Activated naive CD4-positive, alpha-beta T cell treated with anti-CD3 and anti-CD28 coated beads for 36 hours (primary cell): ENCODE measurements at regions of chr16 and their contacts with region 1.

Region 1: DNA sequence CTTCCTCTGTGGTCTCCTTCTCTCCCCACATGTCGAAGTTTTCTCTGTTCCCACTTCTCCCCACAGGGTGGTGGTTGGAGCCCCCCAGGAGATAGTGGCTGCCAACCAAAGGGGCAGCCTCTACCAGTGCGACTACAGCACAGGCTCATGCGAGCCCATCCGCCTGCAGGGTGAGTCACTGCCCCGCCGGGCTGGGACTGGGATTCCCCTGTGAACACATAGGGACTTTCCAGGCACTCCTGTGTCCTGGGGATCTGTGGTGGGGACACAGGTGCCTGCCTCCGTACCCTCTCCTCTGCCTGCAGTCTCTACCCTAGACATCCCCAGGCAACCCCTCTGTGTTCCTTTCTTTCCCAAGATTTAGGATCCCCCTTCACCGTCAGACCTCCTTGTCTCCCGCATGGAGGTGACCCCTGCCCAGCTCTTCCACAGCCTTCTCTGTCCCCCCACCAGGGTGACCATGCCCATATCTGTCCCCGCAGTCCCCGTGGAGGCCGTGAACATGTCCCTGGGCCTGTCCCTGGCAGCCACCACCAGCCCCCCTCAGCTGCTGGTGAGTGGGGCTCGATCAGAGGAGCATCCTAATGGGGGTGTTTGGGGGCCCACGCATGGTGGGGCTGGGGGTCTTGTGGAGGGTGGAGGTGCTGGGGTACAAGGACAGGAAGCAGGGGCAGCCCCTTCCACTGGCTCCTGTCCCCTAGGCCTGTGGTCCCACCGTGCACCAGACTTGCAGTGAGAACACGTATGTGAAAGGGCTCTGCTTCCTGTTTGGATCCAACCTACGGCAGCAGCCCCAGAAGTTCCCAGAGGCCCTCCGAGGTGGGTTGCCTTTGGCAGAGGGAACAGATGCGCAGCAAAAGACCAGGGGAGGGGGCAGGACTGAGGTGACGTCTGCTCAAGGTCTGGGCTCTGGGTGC is 5.8 kb downstream of the ITGAM start:
- DNase-seq: peak; percentile 92
- H3K4me3 Mint-ChIP-seq: no peak overlapping the region
- H3K27ac Mint-ChIP-seq: peak overlapping the region; percentile 79
- H3K4me1 Mint-ChIP-seq: peaks cover 31% of the 10 kb centered on the region
- H3K27me3 Mint-ChIP-seq: peaks cover under 1% of the 10 kb centered on the region

Region 2: GRCh38 chr16:31202414-31203375 is 62.9 kb before region 1 on chr16 and contains the start of gene PYCARD:
- CTCF ChIA-PET with region 1: interaction called, 4 read pairs
- intact Hi-C with region 1: loop called (anchors 1 kb)
- DNase-seq: peak; percentile 31
- H3K4me3 Mint-ChIP-seq: peak within 1 kb of the TSS; percentile 71
- H3K27ac Mint-ChIP-seq: no peak within 1 kb of the TSS
- H3K4me1 Mint-ChIP-seq: peaks cover 46% of the 10 kb centered on the region
- H3K27me3 Mint-ChIP-seq: no peaks in the 10 kb centered on the region
- total RNA-seq, gene PYCARD: 2.4 to 2.5 TPM

Region 3: GRCh38 chr16:31248344-31248743 is 17.2 kb before region 1 on chr16:
- CTCF ChIA-PET with region 1: no interaction called
- intact Hi-C with region 1: loop called (anchors 2 kb)
- DNase-seq: no peak
- H3K4me3 Mint-ChIP-seq: no peak overlapping the region
- H3K27ac Mint-ChIP-seq: no peak overlapping the region
- H3K4me1 Mint-ChIP-seq: peaks cover 18% of the 10 kb centered on the region
- H3K27me3 Mint-ChIP-seq: no peaks in the 10 kb centered on the region

Region 4: DNA sequence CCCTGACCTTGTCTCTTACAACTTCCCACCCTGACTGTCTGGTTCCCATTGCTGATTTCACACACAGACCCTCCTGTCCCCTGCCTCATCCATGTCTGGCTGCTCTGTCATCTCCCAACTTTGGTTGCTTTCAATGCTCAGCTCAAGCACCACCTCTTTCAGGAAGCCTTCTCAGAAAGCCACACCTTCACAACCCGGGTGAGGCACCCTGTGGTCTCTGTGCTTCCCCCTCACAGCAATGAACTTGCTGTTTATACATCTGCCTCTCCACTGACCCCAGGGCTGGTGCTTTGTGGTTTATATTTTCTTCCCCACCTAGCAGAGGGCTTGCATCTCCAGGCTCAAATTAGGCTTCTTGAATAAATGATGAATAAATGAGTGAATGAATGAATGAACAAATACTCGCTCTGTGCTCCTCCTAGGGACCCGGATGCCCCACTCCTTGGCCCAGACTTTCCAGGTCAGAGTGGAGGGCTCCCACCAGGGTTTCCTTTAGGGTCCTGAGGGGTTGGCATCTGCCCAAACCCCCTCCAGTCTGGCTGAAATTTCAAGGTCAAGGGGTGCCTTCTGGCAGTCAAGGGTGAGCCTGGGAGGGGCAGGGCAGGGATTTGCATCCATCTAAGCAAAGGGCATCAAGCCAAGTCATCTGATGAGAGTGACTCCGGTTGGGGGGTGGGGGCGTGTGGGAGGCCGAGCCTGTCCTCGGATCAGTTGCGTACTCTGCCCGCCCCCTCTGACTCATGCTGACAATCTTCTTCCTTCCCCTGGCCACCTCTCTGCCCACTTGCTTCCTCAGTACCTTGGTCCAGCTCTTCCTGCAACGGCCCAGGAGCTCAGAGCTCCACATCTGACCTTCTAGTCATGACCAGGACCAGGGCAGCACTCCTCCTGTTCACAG is 89.1 kb after region 1 on chr16 and contains the start of gene ITGAX:
- CTCF ChIA-PET with region 1: no interaction called
- intact Hi-C with region 1: loop called (anchors 1 kb)
- DNase-seq: peak; percentile 91
- H3K4me3 Mint-ChIP-seq: no peak within 1 kb of the TSS
- H3K27ac Mint-ChIP-seq: peak within 1 kb of the TSS; percentile 80
- H3K4me1 Mint-ChIP-seq: peaks cover 27% of the 10 kb centered on the region
- H3K27me3 Mint-ChIP-seq: no peaks in the 10 kb centered on the region
- total RNA-seq, gene ITGAX: 2.4 to 2.9 TPM

Region 5: GRCh38 chr16:31382485-31383161 is 117.0 kb after region 1 on chr16:
- CTCF ChIA-PET with region 1: interaction called, 4 read pairs
- intact Hi-C with region 1: loop called (anchors 1 kb)
- DNase-seq: peak; percentile 81
- H3K4me3 Mint-ChIP-seq: no peak overlapping the region
- H3K27ac Mint-ChIP-seq: no peak overlapping the region
- H3K4me1 Mint-ChIP-seq: peaks cover 15% of the 10 kb centered on the region
- H3K27me3 Mint-ChIP-seq: peaks cover 5% of the 10 kb centered on the region

Region 6: GRCh38 chr16:31440516-31441184 is 175.1 kb after region 1 on chr16:
- CTCF ChIA-PET with region 1: no interaction called
- intact Hi-C with region 1: loop called (anchors 10 kb)
- DNase-seq: no peak
- H3K4me3 Mint-ChIP-seq: no peak overlapping the region
- H3K27ac Mint-ChIP-seq: no peak overlapping the region
- H3K4me1 Mint-ChIP-seq: peaks cover 9% of the 10 kb centered on the region
- H3K27me3 Mint-ChIP-seq: no peaks in the 10 kb centered on the region